ENCODE measurements at regions of chr12 and their contacts with region 1.

Region 1: DNA sequence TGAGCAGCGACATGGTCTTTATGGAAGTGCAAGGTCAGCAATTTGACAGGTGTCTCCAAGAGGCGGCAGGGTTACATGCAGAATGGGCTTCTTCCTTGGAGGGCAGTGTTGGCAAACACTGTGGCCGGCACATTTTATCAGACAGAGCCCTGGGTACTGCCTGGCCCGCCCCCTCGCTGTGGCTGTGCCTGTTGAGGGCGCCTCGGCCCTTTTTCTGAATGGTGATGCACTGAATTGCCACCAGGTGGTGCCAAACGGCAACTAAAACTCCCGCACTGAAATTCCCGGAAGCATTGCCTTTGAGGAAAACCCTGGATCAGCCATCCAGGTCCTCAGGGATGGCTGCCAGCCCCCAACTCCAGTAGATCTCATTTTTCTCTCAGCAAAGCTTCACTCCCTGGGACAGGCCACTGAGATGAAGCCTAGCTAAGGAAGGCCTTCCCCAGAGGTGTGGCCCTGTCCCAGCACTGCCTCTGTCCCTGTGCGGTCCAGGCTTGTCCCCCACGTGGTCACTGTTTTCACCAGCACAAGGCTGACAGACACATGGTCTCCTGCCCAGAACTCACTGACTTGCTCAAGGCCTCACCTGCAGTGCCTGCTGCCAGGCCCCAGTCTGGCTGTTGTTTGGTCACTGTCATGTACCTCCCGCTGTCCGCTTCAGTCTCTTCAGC is 73.6 kb downstream of the TESC start:
- DNase-seq: peak; percentile 76 to 81 (median 78)
- ATAC-seq: peak; percentile 96
- H3K4me3 ChIP-seq: no peak overlapping the region
- H3K27ac ChIP-seq: no peak overlapping the region; the same call in 2 of the 3 replicates
- H3K4me1 ChIP-seq: peaks cover 4 to 16% of the 10 kb centered on the region in 2 experiments; a peak in 4 of 5 replicates
- H3K27me3 ChIP-seq: no peaks in the 10 kb centered on the region
- CTCF ChIP-seq: peak; percentile 93 to 98 (median 98)
- EP300 ChIP-seq: no peak
- POLR2A ChIP-seq: no peak
- RAD21 ChIP-seq: peak; percentile 94 to 98

Region 2: DNA sequence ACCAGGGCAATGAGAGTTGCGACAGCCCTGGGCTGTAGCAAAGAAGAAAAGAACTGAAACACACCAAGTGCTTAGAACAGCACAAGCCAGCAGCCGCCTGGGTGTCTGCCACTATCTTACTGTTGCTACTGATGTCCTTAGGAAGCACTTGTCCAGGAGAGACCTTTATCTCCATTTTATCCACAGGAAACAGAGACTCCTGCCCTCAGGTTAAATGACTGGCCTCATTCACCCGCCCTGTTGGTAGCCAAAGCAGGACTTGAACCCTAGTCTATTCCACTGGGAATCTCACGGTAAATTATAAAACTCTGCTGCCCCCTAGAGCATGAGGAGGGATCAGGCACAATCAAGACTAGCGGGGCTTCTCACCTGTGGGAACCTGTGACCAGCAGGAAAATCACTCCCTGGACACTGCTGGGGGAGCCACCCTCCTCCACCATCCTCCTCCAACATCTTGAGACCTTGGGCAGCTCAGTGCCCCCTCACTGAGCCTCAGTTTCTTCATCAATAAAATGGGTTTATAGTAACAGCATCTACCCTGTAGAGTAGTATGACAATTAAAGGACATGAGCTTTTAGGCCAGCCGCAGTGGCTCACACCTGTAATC is 94.1 kb after region 1 on chr12:
- CTCF ChIA-PET with region 1: interaction called, 62 read pairs
- POLR2A ChIA-PET with region 1: interaction called, 3 read pairs
- in situ Hi-C with region 1: no loop called
- intact Hi-C with region 1: loop called (anchors 1 kb)
- DNase-seq: peak; percentile 72 to 76 (median 74)
- ATAC-seq: peak; percentile 93
- H3K4me3 ChIP-seq: no peak overlapping the region
- H3K27ac ChIP-seq: no peak overlapping the region
- H3K4me1 ChIP-seq: peaks cover 3 to 4% of the 10 kb centered on the region in 2 experiments; a peak in 4 of 5 replicates
- H3K27me3 ChIP-seq: no peaks in the 10 kb centered on the region; a peak in 1 of 5 replicates
- CTCF ChIP-seq: peak; percentile 81 to 90 (median 85)
- EP300 ChIP-seq: no peak
- POLR2A ChIP-seq: no peak
- RAD21 ChIP-seq: peak; percentile 89 to 93

Region 3: GRCh38 chr12:117134721-117135120 is 109.1 kb after region 1 on chr12:
- CTCF ChIA-PET with region 1: interaction called, 33 read pairs
- POLR2A ChIA-PET with region 1: interaction called, 3 read pairs
- in situ Hi-C with region 1: no loop called
- intact Hi-C with region 1: no loop called
- DNase-seq: no peak
- ATAC-seq: no peak
- H3K4me3 ChIP-seq: no peak overlapping the region
- H3K27ac ChIP-seq: no peak overlapping the region
- H3K4me1 ChIP-seq: no peaks in the 10 kb centered on the region; a peak in 1 of 5 replicates
- H3K27me3 ChIP-seq: peaks cover 9 to 14% of the 10 kb centered on the region in 2 experiments; a peak in 2 of 5 replicates
- CTCF ChIP-seq: no peak
- EP300 ChIP-seq: no peak
- POLR2A ChIP-seq: no peak
- RAD21 ChIP-seq: no peak

Region 4: DNA sequence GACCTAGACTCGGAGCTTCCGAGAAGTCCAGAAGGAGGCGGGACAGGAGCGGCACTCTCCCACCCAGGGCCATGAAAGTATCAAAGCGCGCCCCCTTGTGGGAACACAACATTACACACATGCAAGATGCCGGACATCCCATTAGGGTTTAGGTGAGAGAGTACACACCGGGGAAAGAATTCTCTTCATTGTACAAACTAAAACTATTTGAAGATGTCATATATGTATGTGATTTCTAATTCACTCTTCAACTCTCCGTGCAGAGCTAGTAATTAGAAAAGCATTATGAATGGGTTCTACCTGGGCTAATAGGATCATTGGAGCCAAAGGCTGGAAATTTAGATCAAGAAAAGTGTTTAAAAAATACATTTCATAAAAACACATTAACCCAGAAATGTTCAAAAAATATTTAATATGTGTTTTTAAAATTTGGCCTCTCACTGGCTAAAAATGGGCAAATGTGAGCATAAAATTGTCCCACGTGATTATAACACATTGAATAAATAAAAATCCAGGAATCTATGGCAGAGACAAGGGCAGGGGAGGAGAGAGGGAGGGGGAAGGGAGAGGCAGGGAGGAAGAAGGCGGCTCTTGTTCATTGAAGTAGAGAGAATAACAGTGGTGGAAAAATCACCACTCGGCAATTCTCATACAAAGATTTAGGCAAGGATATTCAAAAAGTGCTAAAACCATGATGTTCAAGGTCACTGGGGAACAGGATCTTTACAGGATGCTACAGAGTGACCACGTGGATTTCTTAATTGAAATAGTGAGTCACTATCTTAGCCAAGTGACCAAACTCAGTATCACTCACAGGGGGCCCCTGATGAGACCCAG is 125.8 kb after region 1 on chr12:
- CTCF ChIA-PET with region 1: interaction called, 26 read pairs
- POLR2A ChIA-PET with region 1: interaction called, 3 read pairs
- in situ Hi-C with region 1: no loop called
- intact Hi-C with region 1: loop called (anchors 1 kb)
- DNase-seq: peak; percentile 84 to 93 (median 84)
- ATAC-seq: peak; percentile 91
- H3K4me3 ChIP-seq: no peak overlapping the region
- H3K27ac ChIP-seq: no peak overlapping the region; the same call in 2 of the 3 replicates
- H3K4me1 ChIP-seq: peaks cover 11 to 12% of the 10 kb centered on the region in 2 experiments; a peak in 3 of 5 replicates
- H3K27me3 ChIP-seq: no peaks in the 10 kb centered on the region
- CTCF ChIP-seq: peak; percentile 84 to 87 (median 87)
- EP300 ChIP-seq: no peak
- POLR2A ChIP-seq: no peak
- RAD21 ChIP-seq: peak; percentile 42 to 75